WTC11 (cell line): ENCODE measurements at regions of chr15 and their contacts with region 1.

Region 1: DNA sequence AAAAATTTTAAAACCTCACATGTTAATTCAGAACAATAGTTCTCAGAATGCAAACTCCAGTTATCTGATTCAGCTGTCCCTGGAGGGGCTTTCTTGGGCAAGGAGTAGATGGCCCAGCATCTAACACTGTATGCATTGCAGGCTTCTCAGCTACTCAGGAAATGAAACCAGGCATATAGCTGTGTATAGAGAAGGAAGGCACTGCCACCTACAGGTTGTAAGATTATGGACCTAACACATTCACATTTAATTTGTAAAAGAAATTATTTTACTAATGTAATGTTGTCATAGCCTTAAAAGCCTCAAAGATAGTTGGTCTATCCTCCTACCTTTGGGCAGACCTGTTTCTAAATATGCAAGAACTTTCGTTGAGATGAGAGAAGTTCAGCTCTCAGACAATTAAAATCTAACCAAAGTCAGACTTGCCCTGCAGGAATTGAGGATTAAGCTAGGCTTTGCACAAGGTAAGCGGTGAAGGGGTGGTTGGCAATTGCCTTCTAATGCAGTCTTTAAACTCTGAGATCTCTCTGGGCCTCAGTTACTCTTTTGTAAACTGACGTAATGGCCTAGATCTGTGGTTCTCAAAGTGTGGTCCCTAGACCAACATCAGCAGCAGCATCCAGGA is 132.8 kb upstream of the SLC24A5 start:
- DNase-seq: no peak
- ATAC-seq: peak; percentile 94
- H3K4me3 Mint-ChIP-seq: no peak overlapping the region
- H3K27ac Mint-ChIP-seq: no peak overlapping the region
- H3K4me1 Mint-ChIP-seq: peaks cover 8% of the 10 kb centered on the region
- H3K27me3 Mint-ChIP-seq: no peaks in the 10 kb centered on the region
- CTCF ChIP-seq: no peak; the same call in none of the 2 replicates

Region 2: GRCh38 chr15:47551079-47551478 is 436.9 kb before region 1 on chr15:
- CTCF ChIA-PET with region 1: interaction called, 15 read pairs
- POLR2A ChIA-PET with region 1: no interaction called
- DNase-seq: peak; percentile 43
- ATAC-seq: peak; percentile 85
- H3K4me3 Mint-ChIP-seq: no peak overlapping the region
- H3K27ac Mint-ChIP-seq: no peak overlapping the region
- H3K4me1 Mint-ChIP-seq: peaks cover 2% of the 10 kb centered on the region; the same call in 1 of the 2 replicates
- H3K27me3 Mint-ChIP-seq: no peaks in the 10 kb centered on the region
- CTCF ChIP-seq: peak; percentile 20; the same call in 1 of the 2 replicates

Region 3: DNA sequence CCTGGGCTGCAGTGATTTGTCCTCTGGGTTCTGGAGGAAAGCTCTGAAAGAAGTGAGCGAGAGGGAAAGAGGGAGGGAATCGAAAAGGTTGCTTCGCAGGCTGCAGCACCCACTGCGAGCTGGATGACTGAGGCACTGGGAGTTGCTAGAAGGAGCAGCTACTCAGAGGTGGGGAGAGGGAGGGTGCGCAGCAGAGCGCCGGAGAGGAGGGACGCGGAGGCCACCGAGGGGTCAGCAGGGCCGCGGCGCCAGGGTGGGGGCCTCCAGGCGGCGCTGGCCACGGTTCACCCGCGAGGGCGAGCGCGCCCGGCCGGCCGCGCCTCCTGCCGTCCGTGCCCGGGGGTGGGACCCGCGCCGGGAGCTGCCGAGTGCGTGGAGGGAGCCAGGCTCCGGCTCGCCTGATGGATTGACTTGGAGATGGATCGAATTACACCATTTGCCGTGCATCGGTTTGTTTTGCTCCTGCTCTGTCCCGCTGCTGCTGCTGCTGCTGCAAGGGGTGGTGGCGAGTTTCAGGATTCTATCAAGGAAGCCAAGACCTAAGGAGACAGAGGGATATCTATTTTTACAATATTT is 270.9 kb before region 1 on chr15 and contains the start of gene SEMA6D:
- CTCF ChIA-PET with region 1: interaction called, 28 read pairs
- POLR2A ChIA-PET with region 1: interaction called, 4 read pairs
- DNase-seq: peak; percentile 76
- ATAC-seq: peak; percentile 76
- H3K4me3 Mint-ChIP-seq: peak within 1 kb of the TSS; percentile 92
- H3K27ac Mint-ChIP-seq: peak within 1 kb of the TSS; percentile 84
- H3K4me1 Mint-ChIP-seq: peaks cover 54% of the 10 kb centered on the region
- H3K27me3 Mint-ChIP-seq: peaks cover 56% of the 10 kb centered on the region
- CTCF ChIP-seq: no peak
- total RNA-seq, gene SEMA6D: 0.98 to 2.6 TPM (median 2.0 TPM) in 3 replicates

Region 4: DNA sequence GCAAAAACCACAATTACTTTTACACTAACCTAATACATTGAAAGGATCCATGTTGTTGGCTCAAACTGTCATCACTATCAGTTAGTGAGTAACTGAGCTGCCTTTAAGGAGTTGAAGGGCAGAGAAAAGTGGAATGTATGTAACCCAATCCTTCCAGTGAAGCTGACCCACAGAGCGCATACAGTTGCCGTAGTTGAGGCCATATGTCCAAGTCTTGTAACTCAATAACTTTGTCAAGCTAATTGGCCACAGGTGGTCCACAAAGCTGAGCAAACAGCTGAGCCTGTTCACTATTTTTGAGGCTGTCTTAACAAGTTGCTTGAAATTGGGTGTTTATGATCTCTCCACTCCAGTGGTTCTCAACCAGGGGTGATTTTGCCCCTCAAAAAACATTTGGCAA is 36.2 kb before region 1 on chr15:
- CTCF ChIA-PET with region 1: interaction called, 11 read pairs
- POLR2A ChIA-PET with region 1: no interaction called
- DNase-seq: no peak
- ATAC-seq: no peak
- H3K4me3 Mint-ChIP-seq: no peak overlapping the region
- H3K27ac Mint-ChIP-seq: no peak overlapping the region
- H3K4me1 Mint-ChIP-seq: peaks cover 28% of the 10 kb centered on the region
- H3K27me3 Mint-ChIP-seq: no peaks in the 10 kb centered on the region
- CTCF ChIP-seq: no peak

Region 5: DNA sequence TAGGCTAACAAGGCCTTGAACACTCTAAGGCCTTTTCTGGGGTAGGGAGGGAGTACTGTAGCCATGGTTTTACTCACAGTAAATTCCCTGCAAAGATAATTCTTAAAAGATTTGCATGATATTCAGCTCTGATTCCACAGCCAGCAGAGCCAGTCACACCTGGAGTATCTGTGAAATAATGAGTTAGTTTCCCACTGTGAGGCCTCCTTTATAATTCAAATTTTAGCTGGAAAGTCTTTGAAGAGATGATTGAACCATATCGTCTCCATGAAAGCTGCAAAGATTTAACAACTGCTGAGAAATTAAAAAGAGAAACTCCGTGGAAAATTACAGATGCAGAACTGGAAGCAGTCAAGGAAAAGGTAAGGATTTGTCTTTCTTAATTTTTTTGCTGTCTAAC is 310.9 kb after region 1 on chr15:
- CTCF ChIA-PET with region 1: no interaction called
- POLR2A ChIA-PET with region 1: no interaction called
- DNase-seq: no peak
- ATAC-seq: peak; percentile 45
- H3K4me3 Mint-ChIP-seq: peak overlapping the region; percentile 46
- H3K27ac Mint-ChIP-seq: peak overlapping the region; percentile 88
- H3K4me1 Mint-ChIP-seq: peaks cover 49% of the 10 kb centered on the region
- H3K27me3 Mint-ChIP-seq: no peaks in the 10 kb centered on the region
- CTCF ChIP-seq: no peak

Region 6: DNA sequence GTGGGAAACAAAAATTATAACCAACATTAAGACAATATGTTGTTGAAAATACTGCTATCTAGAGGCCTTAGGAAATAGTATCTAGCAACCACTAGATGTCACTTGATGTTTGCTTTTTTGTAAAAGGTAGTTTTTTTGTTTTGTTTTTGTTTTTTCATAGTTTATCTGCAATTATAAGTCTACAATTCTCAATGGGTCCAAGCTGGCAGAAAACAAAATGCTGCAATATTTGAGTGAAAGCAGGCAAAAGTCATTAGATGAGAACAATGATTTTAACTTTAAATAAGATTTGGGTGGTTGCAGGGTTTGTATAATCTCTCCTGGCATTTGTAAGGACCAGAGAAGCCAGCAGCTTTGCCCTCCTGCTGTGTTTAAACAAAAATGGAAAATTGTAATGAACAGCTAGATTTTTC is 370.2 kb after region 1 on chr15:
- CTCF ChIA-PET with region 1: no interaction called
- POLR2A ChIA-PET with region 1: no interaction called
- DNase-seq: no peak
- ATAC-seq: no peak
- H3K4me3 Mint-ChIP-seq: no peak overlapping the region
- H3K27ac Mint-ChIP-seq: no peak overlapping the region
- H3K4me1 Mint-ChIP-seq: peaks cover 10% of the 10 kb centered on the region
- H3K27me3 Mint-ChIP-seq: no peaks in the 10 kb centered on the region
- CTCF ChIP-seq: 0 out of 2 replicates have a peak, but pooled peaks have one; percentile 31